ENCODE measurements at regions of chr1 and their contacts with region 1.

Region 1: GRCh38 chr1:20981915-20982314 is 194.8 kb downstream of the EIF4G3 start:
- DNase-seq: no peak
- H3K4me3 Mint-ChIP-seq: no peak overlapping the region
- H3K27ac Mint-ChIP-seq: no peak overlapping the region
- H3K4me1 Mint-ChIP-seq: no peaks in the 10 kb centered on the region
- H3K27me3 Mint-ChIP-seq: no peaks in the 10 kb centered on the region
- CTCF ChIP-seq: no peak

Region 2: DNA sequence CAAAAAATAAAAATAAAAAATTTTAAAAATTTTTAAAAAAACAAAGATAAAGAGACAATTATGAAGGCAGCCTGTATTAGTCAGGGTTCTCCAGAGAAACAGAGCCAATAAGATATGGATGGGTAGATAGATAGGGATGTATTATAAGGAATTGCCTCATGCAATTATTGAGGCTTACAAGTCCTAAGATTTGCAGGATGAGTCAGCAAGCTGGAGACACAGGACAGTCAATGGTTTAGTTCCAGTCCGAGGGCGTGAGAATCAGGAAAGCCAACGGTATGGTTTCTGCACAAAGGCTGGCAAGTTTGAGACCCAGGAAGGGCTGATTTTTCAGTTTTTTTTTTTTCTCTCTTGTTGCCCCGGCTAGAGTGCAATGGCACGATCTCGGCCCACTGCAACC is 218.9 kb after region 1 on chr1:
- CTCF ChIA-PET with region 1: interaction called, 5 read pairs
- intact Hi-C with region 1: loop called (anchors 5 kb)
- DNase-seq: no peak
- H3K4me3 Mint-ChIP-seq: no peak overlapping the region
- H3K27ac Mint-ChIP-seq: no peak overlapping the region
- H3K4me1 Mint-ChIP-seq: no peaks in the 10 kb centered on the region
- H3K27me3 Mint-ChIP-seq: peaks cover 14% of the 10 kb centered on the region
- CTCF ChIP-seq: no peak

Measured in Calu3 (cell line).